OCI-LY7 (cell line): ENCODE measurements at regions of chr11 and their contacts with region 1.

Region 1: DNA sequence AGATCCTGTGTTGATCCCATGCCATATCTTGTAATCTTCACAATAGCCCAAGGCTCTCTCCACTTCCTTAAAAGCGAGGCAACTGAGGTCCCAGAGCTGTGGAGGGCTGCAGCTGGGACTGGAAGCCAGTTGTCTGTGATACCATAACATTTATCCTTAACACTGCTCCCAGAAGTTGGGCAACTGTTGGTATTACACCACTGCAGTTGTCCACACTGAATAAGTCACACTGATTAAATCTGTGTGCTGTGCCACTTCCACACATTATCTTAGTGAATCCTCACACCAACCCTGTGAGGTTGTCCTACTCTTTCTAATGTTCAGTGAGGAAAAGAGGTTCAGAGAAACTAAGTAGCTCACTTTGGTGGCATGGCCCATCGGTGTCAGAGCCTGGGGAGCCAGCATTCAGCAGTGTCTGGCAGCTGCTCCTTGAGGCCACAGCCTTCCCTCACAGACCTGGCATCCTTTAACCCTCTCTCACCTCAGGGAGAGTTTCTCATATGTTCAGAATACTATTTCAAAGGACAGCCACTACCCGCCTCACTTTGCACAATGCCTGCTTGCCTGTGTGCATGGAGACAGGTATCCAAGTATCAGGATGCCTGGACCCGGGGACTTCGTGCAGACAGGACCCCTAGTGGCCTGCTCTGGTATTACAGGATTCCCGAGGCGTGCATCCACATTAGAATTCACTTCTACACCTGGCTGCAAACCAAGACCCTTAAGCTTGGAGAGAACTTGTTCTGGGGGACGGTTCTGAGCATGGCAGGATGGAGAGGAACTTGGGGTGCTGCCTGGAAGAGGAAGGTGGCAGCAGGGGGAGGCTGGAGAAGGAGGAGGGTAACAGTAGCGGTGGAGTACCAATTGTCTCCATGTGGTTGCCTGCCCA is 221.9 kb upstream of the TBCEL start:
- DNase-seq: peak; percentile 72
- H3K4me3 ChIP-seq: no peak overlapping the region
- H3K27ac ChIP-seq: no peak overlapping the region
- H3K4me1 ChIP-seq: peaks cover 7% of the 10 kb centered on the region
- CTCF ChIP-seq: peak; percentile 95

Region 2: DNA sequence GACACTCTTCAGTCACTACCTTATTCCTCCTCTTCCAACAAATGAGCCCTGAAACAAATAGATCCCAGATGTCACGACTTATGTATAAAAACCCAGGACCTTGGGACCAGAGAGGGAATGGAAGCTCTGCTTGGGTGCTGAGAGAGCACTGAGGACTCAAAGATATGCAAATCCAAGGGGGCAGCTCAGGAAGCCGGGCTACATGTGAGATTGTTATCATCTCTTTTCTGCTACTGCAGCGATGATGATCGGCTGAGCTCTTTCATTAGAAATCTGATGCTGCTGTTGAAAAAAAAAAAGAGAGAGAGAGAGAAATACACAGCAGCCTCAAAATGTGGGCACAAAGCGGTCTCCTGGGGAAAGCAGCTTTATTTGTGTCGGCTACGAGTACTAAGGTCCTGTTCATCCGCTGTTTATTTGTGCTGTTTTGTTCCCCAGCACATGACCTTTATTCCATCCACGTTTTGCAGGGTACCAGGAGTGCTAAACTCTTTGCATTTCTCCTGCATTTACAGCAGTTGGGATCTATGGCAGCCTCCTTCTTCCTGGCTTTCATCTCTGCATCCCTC is 784.4 kb before region 1 on chr11:
- CTCF ChIA-PET with region 1: no interaction called
- POLR2A ChIA-PET with region 1: no interaction called
- intact Hi-C with region 1: no loop called
- DNase-seq: no peak
- H3K4me3 ChIP-seq: no peak overlapping the region
- H3K27ac ChIP-seq: no peak overlapping the region
- H3K4me1 ChIP-seq: no peaks in the 10 kb centered on the region
- CTCF ChIP-seq: no peak

Region 3: GRCh38 chr11:120395778-120396177 is 406.3 kb before region 1 on chr11:
- CTCF ChIA-PET with region 1: interaction called, 10 read pairs
- POLR2A ChIA-PET with region 1: no interaction called
- intact Hi-C with region 1: no loop called
- DNase-seq: no peak
- H3K4me3 ChIP-seq: no peak overlapping the region
- H3K27ac ChIP-seq: no peak overlapping the region
- H3K4me1 ChIP-seq: no peaks in the 10 kb centered on the region
- CTCF ChIP-seq: no peak

Region 4: GRCh38 chr11:120660024-120660565 is 141.9 kb before region 1 on chr11:
- CTCF ChIA-PET with region 1: interaction called, 3 read pairs
- POLR2A ChIA-PET with region 1: no interaction called
- intact Hi-C with region 1: loop called (anchors 1 kb)
- DNase-seq: peak; percentile 82
- H3K4me3 ChIP-seq: no peak overlapping the region
- H3K27ac ChIP-seq: no peak overlapping the region
- H3K4me1 ChIP-seq: peaks cover 33% of the 10 kb centered on the region
- CTCF ChIP-seq: peak; percentile 84

Region 5: GRCh38 chr11:120666121-120666639 is 135.9 kb before region 1 on chr11:
- CTCF ChIA-PET with region 1: no interaction called
- POLR2A ChIA-PET with region 1: no interaction called
- intact Hi-C with region 1: loop called (anchors 1 kb)
- DNase-seq: peak; percentile 39
- H3K4me3 ChIP-seq: no peak overlapping the region
- H3K27ac ChIP-seq: no peak overlapping the region
- H3K4me1 ChIP-seq: peaks cover 6% of the 10 kb centered on the region
- CTCF ChIP-seq: peak; percentile 63

Region 6: GRCh38 chr11:120696597-120697218 is 105.3 kb before region 1 on chr11:
- CTCF ChIA-PET with region 1: no interaction called
- POLR2A ChIA-PET with region 1: no interaction called
- intact Hi-C with region 1: loop called (anchors 1 kb)
- DNase-seq: no peak
- H3K4me3 ChIP-seq: no peak overlapping the region
- H3K27ac ChIP-seq: no peak overlapping the region
- H3K4me1 ChIP-seq: peaks cover 37% of the 10 kb centered on the region
- CTCF ChIP-seq: peak; percentile 69

Region 7: DNA sequence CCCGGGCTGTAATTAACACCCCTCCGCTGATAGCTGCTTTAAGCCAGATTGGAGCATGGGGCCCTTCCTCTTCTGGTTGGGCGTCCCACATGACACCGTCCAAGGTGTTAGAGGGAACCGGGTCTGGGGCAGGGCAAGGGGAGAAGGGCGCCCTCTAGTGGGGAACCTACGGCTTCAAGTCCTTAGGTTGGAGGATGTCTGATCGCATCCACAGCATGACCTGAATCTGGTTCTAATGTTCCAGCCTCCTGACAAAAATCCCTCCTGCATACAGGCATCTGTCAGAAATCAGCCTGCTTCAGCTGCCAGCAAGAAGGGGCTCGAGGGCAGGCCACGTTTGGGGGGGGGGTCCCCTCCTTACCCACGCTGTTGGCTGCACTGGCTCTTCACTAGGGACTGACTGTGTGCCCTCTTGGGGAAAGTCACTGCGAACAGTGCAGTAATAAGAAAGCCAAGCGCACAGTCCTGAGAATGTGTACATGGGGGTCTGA is 127.7 kb after region 1 on chr11:
- CTCF ChIA-PET with region 1: no interaction called
- POLR2A ChIA-PET with region 1: interaction called, 3 read pairs
- intact Hi-C with region 1: loop called (anchors 10 kb)
- DNase-seq: peak; percentile 73
- H3K4me3 ChIP-seq: no peak overlapping the region
- H3K27ac ChIP-seq: no peak overlapping the region
- H3K4me1 ChIP-seq: peaks cover 44% of the 10 kb centered on the region
- CTCF ChIP-seq: peak; percentile 89